ENCODE measurements at regions of chr7 and their contacts with region 1.

Region 1: DNA sequence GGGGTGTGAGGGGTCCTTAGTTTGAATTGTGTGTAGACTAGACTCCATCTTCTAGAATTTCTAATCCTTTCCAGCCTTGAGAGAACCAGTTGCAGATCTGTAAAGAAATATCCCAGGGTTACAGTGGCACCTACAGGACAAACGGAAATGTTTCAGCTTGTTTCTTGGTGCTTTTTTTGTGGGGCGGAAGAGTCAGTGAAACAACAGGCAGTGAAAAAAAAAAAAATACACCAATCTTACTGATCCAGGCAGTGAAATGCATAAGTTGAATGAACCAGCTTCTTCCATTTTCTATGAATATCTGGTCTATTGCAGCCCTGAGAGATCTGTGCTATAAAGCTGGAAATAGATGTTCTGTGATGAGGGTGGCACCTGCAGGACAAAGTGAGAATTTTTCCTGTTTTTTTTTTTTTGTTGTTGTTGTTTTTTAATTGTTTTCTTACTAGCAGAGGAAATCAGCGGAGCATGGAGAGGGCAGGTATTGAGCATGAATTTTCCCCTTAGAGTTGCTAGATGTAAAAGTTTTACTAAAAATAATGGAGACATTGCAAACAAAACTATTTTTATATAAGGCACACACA is 81.9 kb upstream of the DYNC1I1 start:
- DNase-seq: peak in 1 of 2 experiments; percentile 54
- H3K4me3 ChIP-seq: no peak overlapping the region
- H3K4me3 Mint-ChIP-seq: peak overlapping the region; percentile 34
- H3K27ac Mint-ChIP-seq: no peak overlapping the region
- H3K4me1 ChIP-seq: no peaks in the 10 kb centered on the region
- H3K4me1 Mint-ChIP-seq: peaks cover 5% of the 10 kb centered on the region
- H3K27me3 ChIP-seq: no peaks in the 10 kb centered on the region
- H3K27me3 Mint-ChIP-seq: no peaks in the 10 kb centered on the region
- CTCF ChIP-seq: peak; percentile 53 to 90

Region 2: DNA sequence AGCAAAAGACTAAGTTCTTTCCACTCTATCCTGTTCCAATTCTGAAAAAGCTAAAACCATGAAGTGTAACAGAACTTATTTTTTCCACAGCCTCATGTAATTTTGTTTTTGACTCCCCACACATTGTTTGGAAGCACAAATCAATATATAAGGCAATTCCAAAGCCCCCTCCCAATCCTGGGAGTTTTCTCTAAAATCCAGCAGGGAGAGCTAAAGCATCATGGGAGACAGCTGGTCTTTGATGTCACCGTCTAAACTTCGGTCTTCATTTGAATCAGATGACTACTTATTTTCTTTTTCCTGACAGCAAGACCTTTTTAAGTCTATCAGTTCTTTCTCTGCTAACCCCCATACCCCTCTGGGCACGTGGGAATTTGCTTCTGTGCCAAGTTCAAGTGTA is 332.8 kb before region 1 on chr7:
- CTCF ChIA-PET with region 1: no interaction called
- POLR2A ChIA-PET with region 1: no interaction called
- intact Hi-C with region 1: loop called (anchors 5 kb)
- DNase-seq: no peak
- H3K4me3 ChIP-seq: no peak overlapping the region
- H3K4me3 Mint-ChIP-seq: no peak overlapping the region
- H3K27ac Mint-ChIP-seq: no peak overlapping the region
- H3K4me1 ChIP-seq: no peaks in the 10 kb centered on the region
- H3K4me1 Mint-ChIP-seq: no peaks in the 10 kb centered on the region
- H3K27me3 ChIP-seq: no peaks in the 10 kb centered on the region
- H3K27me3 Mint-ChIP-seq: peaks cover 2% of the 10 kb centered on the region
- CTCF ChIP-seq: peak; percentile 18 to 37

Region 3: GRCh38 chr7:95511716-95512260 is 178.7 kb before region 1 on chr7:
- CTCF ChIA-PET with region 1: interaction called, 71 read pairs
- POLR2A ChIA-PET with region 1: interaction called, 5 read pairs
- intact Hi-C with region 1: loop called (anchors 1 kb)
- DNase-seq: peak; percentile 65 to 75
- H3K4me3 ChIP-seq: no peak overlapping the region
- H3K4me3 Mint-ChIP-seq: no peak overlapping the region
- H3K27ac Mint-ChIP-seq: no peak overlapping the region
- H3K4me1 ChIP-seq: no peaks in the 10 kb centered on the region
- H3K4me1 Mint-ChIP-seq: no peaks in the 10 kb centered on the region
- H3K27me3 ChIP-seq: no peaks in the 10 kb centered on the region
- H3K27me3 Mint-ChIP-seq: peaks cover 9% of the 10 kb centered on the region
- CTCF ChIP-seq: peak; percentile 83 to 84

Region 4: GRCh38 chr7:95527033-95527775 is 163.3 kb before region 1 on chr7:
- CTCF ChIA-PET with region 1: interaction called, 99 read pairs
- POLR2A ChIA-PET with region 1: no interaction called
- intact Hi-C with region 1: loop called (anchors 1 kb)
- DNase-seq: peak; percentile 71 to 74
- H3K4me3 ChIP-seq: no peak overlapping the region
- H3K4me3 Mint-ChIP-seq: no peak overlapping the region
- H3K27ac Mint-ChIP-seq: no peak overlapping the region
- H3K4me1 ChIP-seq: no peaks in the 10 kb centered on the region
- H3K4me1 Mint-ChIP-seq: no peaks in the 10 kb centered on the region
- H3K27me3 ChIP-seq: no peaks in the 10 kb centered on the region
- H3K27me3 Mint-ChIP-seq: peaks cover 4% of the 10 kb centered on the region
- CTCF ChIP-seq: peak; percentile 84 to 93

Region 5: GRCh38 chr7:95545078-95545498 is 145.4 kb before region 1 on chr7:
- CTCF ChIA-PET with region 1: interaction called, 62 read pairs
- POLR2A ChIA-PET with region 1: no interaction called
- intact Hi-C with region 1: loop called (anchors 1 kb)
- DNase-seq: peak in 1 of 2 experiments; percentile 43
- H3K4me3 ChIP-seq: no peak overlapping the region
- H3K4me3 Mint-ChIP-seq: peak overlapping the region; percentile 19
- H3K27ac Mint-ChIP-seq: no peak overlapping the region
- H3K4me1 ChIP-seq: no peaks in the 10 kb centered on the region
- H3K4me1 Mint-ChIP-seq: peaks cover 7% of the 10 kb centered on the region
- H3K27me3 ChIP-seq: no peaks in the 10 kb centered on the region
- H3K27me3 Mint-ChIP-seq: peaks cover 2% of the 10 kb centered on the region
- CTCF ChIP-seq: peak; percentile 51 to 80

Region 6: DNA sequence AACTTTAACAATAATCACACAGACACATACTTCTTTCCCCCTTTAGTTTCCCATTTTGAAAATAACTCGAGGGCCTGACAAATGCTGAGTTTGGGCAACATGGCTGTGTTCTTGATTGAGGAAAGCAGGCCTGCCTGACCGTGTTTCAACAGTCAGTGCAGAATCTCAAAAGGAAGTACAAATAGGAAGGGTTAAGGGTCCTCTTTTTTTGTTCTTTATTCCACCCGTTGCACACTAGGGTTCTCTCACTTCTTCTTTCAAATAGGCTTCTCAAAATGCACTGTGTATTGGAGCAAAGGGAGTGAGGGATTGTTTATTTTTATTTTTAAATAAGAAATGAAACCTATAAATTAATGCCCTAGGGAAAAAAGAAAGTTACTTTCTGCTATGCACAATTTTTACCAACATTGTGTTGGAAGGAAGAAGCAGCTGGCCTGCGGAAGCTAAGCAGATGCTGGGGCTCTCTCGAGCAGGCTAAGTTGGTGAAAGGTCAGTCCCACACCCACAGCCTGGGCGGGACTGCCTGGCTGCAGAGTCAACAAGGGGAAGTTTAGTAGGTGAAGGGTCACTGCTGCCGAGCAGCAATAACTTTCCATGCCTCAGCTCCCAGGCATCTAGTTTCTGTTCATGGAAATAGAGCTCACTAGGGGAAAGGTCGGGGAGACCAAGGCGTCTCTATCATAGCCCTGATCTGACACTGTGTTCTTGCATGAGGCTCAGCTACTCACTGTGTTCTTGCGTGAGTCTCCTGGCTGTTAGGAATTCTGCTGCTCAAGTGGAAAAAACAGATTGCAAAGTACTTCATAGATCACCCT is 81.9 kb before region 1 on chr7:
- CTCF ChIA-PET with region 1: interaction called, 11 read pairs
- POLR2A ChIA-PET with region 1: no interaction called
- intact Hi-C with region 1: loop called (anchors 5 kb)
- DNase-seq: peak; percentile 90 to 95
- H3K4me3 ChIP-seq: no peak overlapping the region
- H3K4me3 Mint-ChIP-seq: peak overlapping the region; percentile 54
- H3K27ac Mint-ChIP-seq: peak overlapping the region; percentile 53
- H3K4me1 ChIP-seq: peaks cover 38% of the 10 kb centered on the region
- H3K4me1 Mint-ChIP-seq: peaks cover 8% of the 10 kb centered on the region
- H3K27me3 ChIP-seq: no peaks in the 10 kb centered on the region
- H3K27me3 Mint-ChIP-seq: no peaks in the 10 kb centered on the region
- CTCF ChIP-seq: no peak

Region 7: GRCh38 chr7:95871078-95871782 is 180.8 kb after region 1 on chr7:
- CTCF ChIA-PET with region 1: interaction called, 14 read pairs
- POLR2A ChIA-PET with region 1: no interaction called
- intact Hi-C with region 1: no loop called
- DNase-seq: peak; percentile 46 to 59
- H3K4me3 ChIP-seq: no peak overlapping the region
- H3K4me3 Mint-ChIP-seq: no peak overlapping the region
- H3K27ac Mint-ChIP-seq: no peak overlapping the region
- H3K4me1 ChIP-seq: no peaks in the 10 kb centered on the region
- H3K4me1 Mint-ChIP-seq: no peaks in the 10 kb centered on the region
- H3K27me3 ChIP-seq: no peaks in the 10 kb centered on the region
- H3K27me3 Mint-ChIP-seq: peaks cover 3% of the 10 kb centered on the region
- CTCF ChIP-seq: peak; percentile 58 to 63

Measured in Caco-2 (cell line).